ENCODE measurements at regions of chr2 and their contacts with region 1.

Region 1: DNA sequence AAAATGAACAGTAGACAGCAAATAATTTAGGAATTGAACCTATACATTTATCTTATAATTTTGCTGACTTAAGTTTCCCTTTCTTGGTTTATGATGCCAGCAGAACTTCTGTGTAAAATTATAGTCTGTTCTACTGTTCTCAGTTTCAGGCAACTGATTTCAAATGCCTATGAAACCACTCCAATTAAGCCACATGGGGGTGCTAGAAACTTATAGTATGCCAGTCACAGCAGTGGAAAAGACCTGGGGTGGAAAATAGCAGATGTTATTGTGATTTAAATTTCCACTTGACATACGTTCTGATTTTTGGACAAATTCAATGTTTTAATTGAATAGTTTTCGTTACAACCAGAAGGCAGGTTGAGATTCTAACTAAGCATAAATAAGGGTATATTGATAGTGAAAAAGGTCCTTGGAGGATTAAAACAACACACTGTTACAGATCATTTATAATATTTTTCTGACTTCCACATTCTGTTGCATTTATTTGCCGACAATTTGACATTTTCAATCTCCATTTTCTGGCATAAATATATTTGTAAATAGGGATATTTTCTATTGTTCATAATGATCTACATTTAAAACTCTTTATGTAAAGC is 61.4 kb downstream of the CPS1 start:
- DNase-seq: peak; percentile 56
- H3K4me3 Mint-ChIP-seq: no peak overlapping the region
- H3K27ac Mint-ChIP-seq: no peak overlapping the region
- H3K4me1 Mint-ChIP-seq: no peaks in the 10 kb centered on the region
- H3K27me3 Mint-ChIP-seq: no peaks in the 10 kb centered on the region
- CTCF ChIP-seq: peak; percentile 70

Region 2: DNA sequence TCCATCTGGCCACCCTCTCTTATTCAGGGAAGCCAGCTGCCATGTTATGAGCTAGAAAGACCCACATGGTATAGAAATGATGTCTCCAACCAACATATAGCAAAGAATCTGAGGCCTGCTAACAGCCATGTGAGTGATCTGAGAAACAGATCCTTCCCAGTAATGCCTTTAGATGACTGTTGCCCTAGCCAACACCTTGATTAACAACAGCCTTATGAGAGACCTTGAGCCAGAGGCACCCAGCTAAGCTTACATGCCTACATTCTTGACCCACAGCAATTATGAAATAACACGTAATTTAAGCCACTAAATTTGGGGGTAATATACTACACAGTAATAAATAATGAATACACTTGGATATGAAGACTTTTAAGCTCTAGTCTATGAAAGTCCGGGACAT is 459.6 kb before region 1 on chr2:
- CTCF ChIA-PET with region 1: no interaction called
- POLR2A ChIA-PET with region 1: no interaction called
- intact Hi-C with region 1: no loop called
- DNase-seq: no peak
- H3K4me3 Mint-ChIP-seq: no peak overlapping the region
- H3K27ac Mint-ChIP-seq: no peak overlapping the region
- H3K4me1 Mint-ChIP-seq: peaks cover 5% of the 10 kb centered on the region
- H3K27me3 Mint-ChIP-seq: no peaks in the 10 kb centered on the region
- CTCF ChIP-seq: no peak

Region 3: GRCh38 chr2:210606001-210606400 is 11.8 kb before region 1 on chr2:
- CTCF ChIA-PET with region 1: interaction called, 13 read pairs
- POLR2A ChIA-PET with region 1: interaction called, 4 read pairs
- intact Hi-C with region 1: no loop called
- DNase-seq: no peak
- H3K4me3 Mint-ChIP-seq: no peak overlapping the region
- H3K27ac Mint-ChIP-seq: no peak overlapping the region
- H3K4me1 Mint-ChIP-seq: no peaks in the 10 kb centered on the region
- H3K27me3 Mint-ChIP-seq: no peaks in the 10 kb centered on the region
- CTCF ChIP-seq: no peak

Region 4: DNA sequence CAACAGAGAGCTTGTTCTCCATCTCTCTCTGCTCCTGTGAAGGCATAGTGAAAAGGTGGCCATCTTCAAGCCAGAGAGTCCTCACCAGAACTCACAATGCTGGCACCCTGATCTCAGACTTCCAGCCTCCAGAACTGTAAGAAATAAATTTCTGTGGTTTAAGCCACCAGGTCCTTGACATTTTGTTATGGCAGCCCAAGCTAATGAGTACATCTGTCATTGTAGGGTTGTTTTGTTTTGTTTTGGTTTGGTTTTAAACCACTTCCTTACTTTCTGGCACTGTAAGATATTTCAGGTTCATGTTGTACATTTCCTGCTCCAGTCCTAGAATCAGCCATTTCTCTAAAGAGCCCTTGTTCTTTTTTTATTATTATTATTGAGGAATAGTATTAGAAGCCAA is 109.7 kb after region 1 on chr2:
- CTCF ChIA-PET with region 1: no interaction called
- POLR2A ChIA-PET with region 1: no interaction called
- intact Hi-C with region 1: no loop called
- DNase-seq: no peak
- H3K4me3 Mint-ChIP-seq: no peak overlapping the region
- H3K27ac Mint-ChIP-seq: no peak overlapping the region
- H3K4me1 Mint-ChIP-seq: no peaks in the 10 kb centered on the region
- H3K27me3 Mint-ChIP-seq: peaks cover 73% of the 10 kb centered on the region
- CTCF ChIP-seq: no peak

Region 5: DNA sequence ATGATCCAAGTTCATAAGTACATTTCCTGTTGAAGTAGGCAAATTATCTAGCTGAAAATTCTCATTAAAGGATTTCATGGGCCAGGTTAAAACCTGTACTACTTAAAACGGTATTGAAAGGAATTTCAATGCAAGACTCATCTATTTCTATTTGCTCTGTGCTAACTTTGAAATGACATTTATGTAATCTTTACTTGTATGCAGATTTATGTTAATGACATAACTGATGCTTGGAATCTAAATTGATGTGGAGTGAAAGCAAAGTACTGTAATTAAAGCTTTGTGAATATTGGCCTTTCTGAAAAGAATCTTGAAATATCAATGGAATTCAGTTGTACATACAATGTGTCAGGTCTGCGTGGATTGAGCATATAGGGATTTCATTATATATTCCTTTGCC is 328.6 kb after region 1 on chr2:
- CTCF ChIA-PET with region 1: no interaction called
- POLR2A ChIA-PET with region 1: no interaction called
- intact Hi-C with region 1: no loop called
- DNase-seq: no peak
- H3K4me3 Mint-ChIP-seq: no peak overlapping the region
- H3K27ac Mint-ChIP-seq: no peak overlapping the region
- H3K4me1 Mint-ChIP-seq: no peaks in the 10 kb centered on the region
- H3K27me3 Mint-ChIP-seq: peaks cover 34% of the 10 kb centered on the region
- CTCF ChIP-seq: no peak

Region 6: GRCh38 chr2:211035548-211036185 is 417.8 kb after region 1 on chr2:
- CTCF ChIA-PET with region 1: interaction called, 10 read pairs
- POLR2A ChIA-PET with region 1: interaction called, 3 read pairs
- intact Hi-C with region 1: loop called (anchors 1 kb)
- DNase-seq: peak; percentile 58
- H3K4me3 Mint-ChIP-seq: no peak overlapping the region
- H3K27ac Mint-ChIP-seq: no peak overlapping the region
- H3K4me1 Mint-ChIP-seq: peaks cover 6% of the 10 kb centered on the region
- H3K27me3 Mint-ChIP-seq: peaks cover 81% of the 10 kb centered on the region
- CTCF ChIP-seq: peak; percentile 43

Region 7: DNA sequence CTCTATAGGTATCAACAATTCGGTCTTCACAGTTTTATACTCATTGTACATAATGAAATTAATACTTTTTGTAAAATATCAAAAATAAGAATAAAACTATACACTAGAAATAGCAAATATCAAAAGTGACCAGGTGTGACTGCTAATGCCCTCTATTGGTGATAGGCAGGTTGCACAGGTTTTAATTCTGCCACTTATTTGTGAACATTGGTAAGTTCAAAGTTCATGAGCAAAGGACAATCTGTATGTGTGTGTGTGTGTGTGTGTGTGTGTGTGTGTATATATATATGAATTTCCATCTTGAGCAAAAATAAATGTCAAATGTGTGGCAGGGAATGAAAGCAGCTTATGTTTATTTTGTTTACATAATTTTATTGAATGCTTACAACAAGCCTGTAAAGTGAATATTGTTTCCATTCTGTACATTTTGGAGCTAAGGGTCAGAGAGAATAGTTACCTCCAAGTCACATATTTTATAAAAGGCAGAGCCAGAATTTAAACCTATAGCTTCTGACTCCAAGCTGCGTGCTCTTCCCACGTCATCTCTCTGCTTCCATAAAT is 476.0 kb after region 1 on chr2:
- CTCF ChIA-PET with region 1: interaction called, 5 read pairs
- POLR2A ChIA-PET with region 1: no interaction called
- intact Hi-C with region 1: loop called (anchors 1 kb)
- DNase-seq: peak; percentile 27
- H3K4me3 Mint-ChIP-seq: no peak overlapping the region
- H3K27ac Mint-ChIP-seq: no peak overlapping the region
- H3K4me1 Mint-ChIP-seq: no peaks in the 10 kb centered on the region
- H3K27me3 Mint-ChIP-seq: peaks cover 93% of the 10 kb centered on the region
- CTCF ChIP-seq: peak; percentile 31

Region 8: GRCh38 chr2:211157856-211158463 is 540.1 kb after region 1 on chr2:
- CTCF ChIA-PET with region 1: interaction called, 4 read pairs
- POLR2A ChIA-PET with region 1: interaction called, 4 read pairs
- intact Hi-C with region 1: loop called (anchors 2 kb)
- DNase-seq: peak; percentile 80
- H3K4me3 Mint-ChIP-seq: no peak overlapping the region
- H3K27ac Mint-ChIP-seq: no peak overlapping the region
- H3K4me1 Mint-ChIP-seq: no peaks in the 10 kb centered on the region
- H3K27me3 Mint-ChIP-seq: peaks cover 72% of the 10 kb centered on the region
- CTCF ChIP-seq: peak; percentile 68